ENCODE measurements at regions of chr1 and their contacts with region 1.

Region 1: GRCh38 chr1:20037877-20038276 is 32.1 kb upstream of the PLA2G5 start:
- DNase-seq: peak; percentile 96
- H3K4me3 ChIP-seq: no peak overlapping the region
- H3K27ac ChIP-seq: peak overlapping the region; percentile 41
- H3K4me1 ChIP-seq: peaks cover 38% of the 10 kb centered on the region
- H3K27me3 ChIP-seq: no peaks in the 10 kb centered on the region
- CTCF ChIP-seq: no peak

Region 2: GRCh38 chr1:20093940-20094391 is 56.1 kb after region 1 on chr1:
- CTCF ChIA-PET with region 1: no interaction called
- dilution Hi-C with region 1: no loop called
- in situ Hi-C with region 1: loop called in 1 of 2 experiments (anchors 10 kb)
- intact Hi-C with region 1: no loop called
- DNase-seq: no peak
- H3K4me3 ChIP-seq: no peak overlapping the region
- H3K27ac ChIP-seq: no peak overlapping the region
- H3K4me1 ChIP-seq: no peaks in the 10 kb centered on the region
- H3K27me3 ChIP-seq: no peaks in the 10 kb centered on the region
- CTCF ChIP-seq: no peak

Region 3: GRCh38 chr1:20184481-20184900 is 146.6 kb after region 1 on chr1:
- CTCF ChIA-PET with region 1: no interaction called
- dilution Hi-C with region 1: no loop called
- in situ Hi-C with region 1: no loop called
- intact Hi-C with region 1: no loop called
- DNase-seq: no peak
- H3K4me3 ChIP-seq: no peak overlapping the region
- H3K27ac ChIP-seq: no peak overlapping the region
- H3K4me1 ChIP-seq: no peaks in the 10 kb centered on the region
- H3K27me3 ChIP-seq: no peaks in the 10 kb centered on the region
- CTCF ChIP-seq: no peak